ENCODE measurements at regions of chr3 and their contacts with region 1.

Region 1: DNA sequence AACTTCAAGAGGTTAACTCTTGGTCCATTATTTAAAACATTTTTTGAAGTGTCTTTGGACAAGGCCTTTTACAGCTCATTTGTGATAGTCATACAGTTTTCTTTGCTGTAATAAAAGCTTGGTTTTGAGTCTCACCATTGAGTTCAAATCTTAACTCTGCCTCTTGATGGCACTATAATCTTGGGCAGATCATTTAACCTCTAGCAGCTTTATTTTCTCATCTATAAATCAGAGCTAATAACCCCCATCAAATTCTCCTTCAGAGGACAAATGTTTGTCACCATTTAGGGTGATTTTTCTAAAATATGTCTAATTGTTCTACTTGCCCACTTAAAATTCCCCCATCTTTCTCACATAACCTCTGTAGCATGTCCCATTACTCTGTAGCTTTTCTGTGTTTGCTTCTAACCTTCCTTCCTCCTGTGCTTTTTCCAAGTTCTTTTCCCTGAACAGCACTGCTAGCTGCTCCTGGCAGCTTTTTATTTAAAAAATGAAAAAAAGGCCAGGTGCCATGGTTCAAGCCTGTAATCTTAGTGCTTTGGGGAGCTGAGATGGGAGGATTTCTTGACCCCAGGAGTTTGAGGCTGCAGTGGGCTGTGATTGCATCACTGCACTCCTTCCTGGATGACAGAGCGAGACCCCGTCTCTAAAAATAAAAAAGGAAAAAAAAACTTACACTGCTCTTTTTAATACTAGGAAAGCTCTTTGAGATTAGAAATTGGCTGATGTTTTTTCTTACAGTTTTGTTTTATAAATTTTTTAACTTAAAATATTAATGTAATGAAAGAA is 28.5 kb downstream of the UBE2E1 start:
- DNase-seq: no peak
- H3K4me3 ChIP-seq: no peak overlapping the region
- H3K27ac ChIP-seq: no peak overlapping the region
- H3K4me1 ChIP-seq: no peaks in the 10 kb centered on the region; a peak in 2 of 7 replicates
- H3K27me3 ChIP-seq: no peaks in the 10 kb centered on the region
- CTCF ChIP-seq: no peak
- EP300 ChIP-seq: no peak
- POLR2A ChIP-seq: no peak
- RAD21 ChIP-seq: peak; percentile 41 to 44

Region 2: GRCh38 chr3:23859016-23859743 is 24.9 kb after region 1 on chr3:
- CTCF ChIA-PET with region 1: interaction called, 11 read pairs
- POLR2A ChIA-PET with region 1: no interaction called
- DNase-seq: no peak
- H3K4me3 ChIP-seq: no peak overlapping the region
- H3K27ac ChIP-seq: no peak overlapping the region
- H3K4me1 ChIP-seq: peaks cover 0 to 11% (median 1%) of the 10 kb centered on the region in 4 experiments; a peak in 4 of 7 replicates
- H3K27me3 ChIP-seq: no peaks in the 10 kb centered on the region
- CTCF ChIP-seq: no peak
- EP300 ChIP-seq: no peak
- POLR2A ChIP-seq: no peak
- RAD21 ChIP-seq: no peak